PC-9 (cell line): ENCODE measurements at regions of chr2 and their contacts with region 1.

Region 1: DNA sequence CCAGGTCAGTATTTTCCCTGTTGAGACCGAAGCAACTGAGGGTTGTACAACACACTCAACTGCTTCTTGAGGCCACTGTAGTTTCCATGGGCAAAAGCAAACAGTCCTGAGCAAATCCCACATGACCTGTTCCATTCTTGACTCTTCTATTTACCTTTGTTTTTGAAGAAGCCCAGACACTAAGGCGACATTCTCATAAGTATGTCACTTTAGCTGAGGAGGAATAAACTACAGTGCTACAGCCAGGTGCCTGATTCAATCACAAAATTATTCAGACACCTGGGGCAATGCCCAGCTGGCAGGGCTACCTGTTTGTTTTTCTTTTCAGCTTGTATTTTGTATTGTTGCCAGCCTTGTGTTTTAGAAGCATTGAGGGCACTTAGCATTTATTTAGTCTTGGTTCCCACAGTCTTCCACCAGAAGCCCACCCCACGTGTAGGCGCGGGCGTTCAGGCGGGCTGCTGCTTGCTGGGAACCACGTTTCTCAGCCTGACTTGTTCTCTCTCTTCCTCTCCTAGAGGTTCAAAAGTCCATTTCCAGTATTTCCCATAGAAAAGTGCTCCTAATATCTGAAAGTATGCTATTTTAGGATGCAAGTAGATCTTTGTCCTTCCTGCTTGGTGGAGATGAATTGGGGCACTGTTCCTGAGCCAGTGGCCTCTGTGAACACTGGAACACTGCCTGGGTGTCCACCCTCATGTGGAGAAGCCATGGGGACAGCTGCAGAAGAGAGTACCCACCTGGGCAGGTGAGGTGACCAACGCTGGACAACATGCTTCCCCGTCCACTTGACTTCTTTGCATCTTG is 99.0 kb upstream of the COPS8 start:
- DNase-seq: peak; percentile 33 to 79
- H3K4me3 ChIP-seq: no peak overlapping the region
- H3K27ac ChIP-seq: no peak overlapping the region
- H3K4me1 ChIP-seq: peaks cover 15% of the 10 kb centered on the region
- H3K27me3 ChIP-seq: peaks cover 39% of the 10 kb centered on the region
- CTCF ChIP-seq: no peak

Region 2: GRCh38 chr2:236972491-236973342 is 14.0 kb before region 1 on chr2:
- CTCF ChIA-PET with region 1: no interaction called
- POLR2A ChIA-PET with region 1: interaction called, 3 read pairs
- intact Hi-C with region 1: loop called (anchors 1 kb)
- DNase-seq: peak; percentile 71 to 80
- H3K4me3 ChIP-seq: no peak overlapping the region
- H3K27ac ChIP-seq: no peak overlapping the region
- H3K4me1 ChIP-seq: peaks cover 6% of the 10 kb centered on the region
- H3K27me3 ChIP-seq: peaks cover 70% of the 10 kb centered on the region
- CTCF ChIP-seq: no peak

Region 3: GRCh38 chr2:237045432-237045831 is 58.7 kb after region 1 on chr2:
- CTCF ChIA-PET with region 1: no interaction called
- POLR2A ChIA-PET with region 1: no interaction called
- intact Hi-C with region 1: no loop called
- DNase-seq: no peak
- H3K4me3 ChIP-seq: no peak overlapping the region
- H3K27ac ChIP-seq: no peak overlapping the region
- H3K4me1 ChIP-seq: no peaks in the 10 kb centered on the region
- H3K27me3 ChIP-seq: peaks cover 81% of the 10 kb centered on the region
- CTCF ChIP-seq: no peak